ENCODE measurements at regions of chrX and their contacts with region 1.

Region 1: GRCh38 chrX:10014462-10015356 is 47.6 kb downstream of the CLDN34 start:
- DNase-seq: peak; percentile 95 to 96
- ATAC-seq: peak; percentile 91
- H3K4me3 ChIP-seq: peak overlapping the region; percentile 54 to 93
- H3K27ac ChIP-seq: peak overlapping the region; percentile 79 to 89
- H3K4me1 ChIP-seq: no peaks in the 10 kb centered on the region
- H3K27me3 ChIP-seq: no peaks in the 10 kb centered on the region

Region 2: DNA sequence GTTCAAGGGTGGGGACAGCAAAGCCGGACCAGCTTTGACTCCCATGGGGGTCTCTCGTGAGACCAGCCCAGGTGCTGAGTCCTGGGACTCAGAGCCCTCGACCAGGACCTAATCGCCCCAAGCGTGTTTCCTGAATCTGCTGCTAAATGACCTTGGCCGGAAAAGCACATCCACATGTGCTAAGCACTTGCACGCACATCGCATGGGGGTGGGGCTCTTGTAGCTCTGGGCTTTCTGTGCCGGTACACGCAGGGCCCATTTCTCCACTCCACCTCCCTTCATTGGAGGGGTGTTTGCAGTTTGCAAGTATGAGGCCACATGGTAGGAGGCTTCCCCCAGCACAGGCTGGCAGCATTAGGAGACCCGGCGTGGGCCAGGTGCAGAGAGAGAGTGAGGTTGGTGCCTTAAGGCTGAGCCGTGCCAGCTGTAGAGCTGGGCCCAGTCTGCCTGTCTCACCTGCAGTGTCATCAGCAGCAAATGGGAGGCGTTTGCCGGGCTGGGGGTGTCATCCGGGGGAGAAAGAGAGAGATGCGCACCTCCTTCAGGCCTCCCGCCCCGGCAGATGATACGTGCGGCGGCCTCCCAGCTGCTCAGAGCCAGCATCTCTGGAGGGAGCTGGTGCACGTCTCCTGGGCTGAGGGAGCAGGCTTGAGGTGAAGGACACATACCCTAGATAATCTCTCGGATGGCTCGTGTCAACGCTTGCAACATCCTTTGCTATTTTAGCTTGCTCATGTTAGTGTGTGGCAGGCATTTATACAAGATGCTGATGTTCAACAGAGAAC is 96.8 kb after region 1 on chrX:
- intact Hi-C with region 1: loop called (anchors 5 kb)
- DNase-seq: no peak
- ATAC-seq: peak; percentile 39
- H3K4me3 ChIP-seq: no peak overlapping the region
- H3K27ac ChIP-seq: no peak overlapping the region
- H3K4me1 ChIP-seq: no peaks in the 10 kb centered on the region
- H3K27me3 ChIP-seq: no peaks in the 10 kb centered on the region